ENCODE measurements at regions of chr15 and their contacts with region 1.

Region 1: DNA sequence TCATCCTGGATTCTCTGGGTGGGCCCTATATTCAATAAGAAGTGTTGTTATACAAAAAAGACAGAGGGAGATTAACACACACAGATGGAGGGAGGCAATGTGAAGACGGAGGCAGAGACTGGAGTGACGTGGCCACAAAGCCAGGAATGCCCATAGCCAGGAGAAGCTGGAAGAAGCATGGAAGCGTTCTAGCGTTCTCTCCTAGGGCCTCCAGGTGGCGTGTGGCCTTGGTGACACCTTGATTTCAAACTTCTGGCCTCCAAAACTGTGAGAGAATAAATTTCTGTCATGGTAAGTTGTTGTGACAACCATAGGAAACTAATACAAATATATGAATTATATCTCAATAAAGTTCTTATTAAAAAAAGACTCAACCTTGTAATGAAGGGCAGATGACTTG is 21.3 kb downstream of the THBS1 start:
- DNase-seq: no peak
- H3K4me3 ChIP-seq: no peak overlapping the region
- H3K27ac ChIP-seq: no peak overlapping the region
- H3K4me1 ChIP-seq: no peaks in the 10 kb centered on the region
- H3K27me3 ChIP-seq: no peaks in the 10 kb centered on the region
- CTCF ChIP-seq: peak; percentile 53 to 72 (median 69)
- EP300 ChIP-seq: no peak
- POLR2A ChIP-seq: no peak
- RAD21 ChIP-seq: peak; percentile 71 to 77

Region 2: GRCh38 chr15:39586387-39587171 is 15.6 kb before region 1 on chr15:
- CTCF ChIA-PET with region 1: interaction called, 6 read pairs
- POLR2A ChIA-PET with region 1: interaction called, 117 read pairs
- DNase-seq: no peak
- H3K4me3 ChIP-seq: no peak overlapping the region
- H3K27ac ChIP-seq: no peak overlapping the region
- H3K4me1 ChIP-seq: peaks cover 4 to 13% (median 9%) of the 10 kb centered on the region in 4 experiments
- H3K27me3 ChIP-seq: no peaks in the 10 kb centered on the region; a peak in 1 of 7 replicates
- CTCF ChIP-seq: no peak
- EP300 ChIP-seq: no peak
- POLR2A ChIP-seq: peak in 1 of 2 experiments; percentile 71; a peak in 2 of 3 replicates
- RAD21 ChIP-seq: no peak

Region 3: DNA sequence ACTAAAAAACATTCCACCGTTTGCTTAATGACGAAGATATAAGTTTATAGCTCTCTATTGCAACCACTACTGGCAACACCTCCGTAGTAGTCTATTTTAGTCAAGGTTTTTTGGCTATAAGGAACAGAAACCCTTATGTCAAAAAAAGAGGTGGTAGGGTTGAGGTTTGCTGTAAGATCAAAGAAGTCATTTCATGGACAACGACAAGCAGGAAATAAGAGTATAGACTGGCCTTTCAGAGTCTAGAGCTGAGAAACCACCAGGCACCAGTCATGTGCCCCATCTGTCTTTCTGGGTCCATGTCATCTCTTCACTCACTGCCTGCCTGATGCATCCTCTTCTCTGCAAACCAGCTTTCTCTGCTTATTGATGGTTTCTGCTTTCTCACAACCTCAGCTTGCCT is 21.4 kb after region 1 on chr15:
- CTCF ChIA-PET with region 1: interaction called, 13 read pairs
- POLR2A ChIA-PET with region 1: no interaction called
- DNase-seq: no peak
- H3K4me3 ChIP-seq: no peak overlapping the region
- H3K27ac ChIP-seq: no peak overlapping the region
- H3K4me1 ChIP-seq: no peaks in the 10 kb centered on the region; a peak in 2 of 7 replicates
- H3K27me3 ChIP-seq: no peaks in the 10 kb centered on the region
- CTCF ChIP-seq: no peak
- EP300 ChIP-seq: no peak
- POLR2A ChIP-seq: no peak
- RAD21 ChIP-seq: no peak

Measured in H1 (cell line).